ENCODE measurements at regions of chr14 and their contacts with region 1.

Region 1: DNA sequence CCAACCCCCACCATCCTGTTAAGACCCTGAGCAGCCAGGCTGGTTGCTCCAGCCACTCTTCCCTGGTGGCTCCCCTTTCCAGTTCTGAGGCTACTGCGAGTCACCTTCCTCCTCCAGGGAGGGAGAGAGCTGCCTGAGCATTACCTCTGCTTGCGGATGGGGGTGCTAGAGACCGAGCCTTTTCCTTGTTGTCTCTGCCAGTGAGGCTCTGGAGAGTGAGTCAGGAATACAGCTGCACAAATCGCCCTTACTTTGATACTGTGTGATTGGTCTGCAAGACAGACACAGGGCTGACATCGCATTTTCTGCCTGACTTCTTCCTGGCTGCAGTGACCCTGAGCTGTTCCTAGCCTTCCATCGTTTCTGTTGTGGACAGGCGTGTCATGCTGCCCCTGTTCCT is 94.3 kb downstream of the SLC25A47 start:
- DNase-seq: peak; percentile 97
- H3K4me3 ChIP-seq: no peak overlapping the region
- H3K27ac ChIP-seq: peak overlapping the region; percentile 79
- H3K4me1 ChIP-seq: peaks cover 18% of the 10 kb centered on the region
- H3K27me3 ChIP-seq: no peaks in the 10 kb centered on the region

Region 2: DNA sequence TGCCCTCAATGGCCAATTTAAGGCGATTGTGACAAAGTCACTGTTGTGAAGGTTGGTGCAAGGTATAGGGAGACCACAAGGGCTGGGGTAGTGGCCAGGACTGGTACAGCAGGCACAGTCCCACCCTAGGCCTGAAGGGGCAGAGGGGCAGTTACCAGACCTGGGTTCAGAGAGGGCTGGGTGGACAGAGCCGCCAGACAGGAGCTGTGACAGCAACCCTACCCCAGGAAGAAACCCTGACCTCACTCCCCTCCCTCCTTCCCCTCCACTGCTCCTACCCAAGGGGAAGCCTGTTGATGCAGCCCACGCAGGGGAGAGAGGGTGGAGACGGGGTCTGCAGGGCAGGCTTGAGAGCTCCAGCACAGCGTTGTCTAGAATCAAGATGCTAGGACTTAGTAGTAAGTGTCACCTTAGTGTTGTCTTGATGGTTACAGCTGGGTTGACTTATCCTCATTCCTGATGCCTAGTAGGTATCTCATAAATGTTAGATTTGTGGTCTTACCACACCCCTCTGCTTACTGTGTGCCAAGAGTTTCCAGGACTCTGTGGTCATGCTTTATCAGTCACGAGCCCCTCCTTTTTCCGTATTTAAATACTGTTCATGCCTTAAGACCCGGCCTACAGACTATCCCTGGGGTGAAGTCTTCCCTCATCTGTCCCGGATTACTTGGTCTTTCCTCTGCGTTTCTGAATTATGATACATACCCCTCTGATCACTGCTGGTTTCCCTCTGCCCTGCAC is 609.9 kb before region 1 on chr14:
- in situ Hi-C with region 1: no loop called
- DNase-seq: peak; percentile 75
- H3K4me3 ChIP-seq: peak overlapping the region; percentile 36
- H3K27ac ChIP-seq: peak overlapping the region; percentile 80
- H3K4me1 ChIP-seq: peaks cover 36% of the 10 kb centered on the region
- H3K27me3 ChIP-seq: no peaks in the 10 kb centered on the region

Region 3: GRCh38 chr14:100605706-100606686 is 188.5 kb after region 1 on chr14:
- in situ Hi-C with region 1: no loop called
- DNase-seq: peak; percentile 41
- H3K4me3 ChIP-seq: no peak overlapping the region
- H3K27ac ChIP-seq: no peak overlapping the region
- H3K4me1 ChIP-seq: no peaks in the 10 kb centered on the region
- H3K27me3 ChIP-seq: peaks cover 23% of the 10 kb centered on the region

Region 4: GRCh38 chr14:100645192-100645990 is 227.9 kb after region 1 on chr14:
- in situ Hi-C with region 1: loop called (anchors 25 kb)
- DNase-seq: peak; percentile 94
- H3K4me3 ChIP-seq: no peak overlapping the region
- H3K27ac ChIP-seq: no peak overlapping the region
- H3K4me1 ChIP-seq: peaks cover 10% of the 10 kb centered on the region
- H3K27me3 ChIP-seq: no peaks in the 10 kb centered on the region

Region 5: GRCh38 chr14:100828031-100828769 is 410.7 kb after region 1 on chr14:
- in situ Hi-C with region 1: loop called (anchors 25 kb)
- DNase-seq: peak; percentile 80
- H3K4me3 ChIP-seq: peak overlapping the region; percentile 94
- H3K27ac ChIP-seq: peak overlapping the region; percentile 96
- H3K4me1 ChIP-seq: no peaks in the 10 kb centered on the region
- H3K27me3 ChIP-seq: no peaks in the 10 kb centered on the region

Region 6: DNA sequence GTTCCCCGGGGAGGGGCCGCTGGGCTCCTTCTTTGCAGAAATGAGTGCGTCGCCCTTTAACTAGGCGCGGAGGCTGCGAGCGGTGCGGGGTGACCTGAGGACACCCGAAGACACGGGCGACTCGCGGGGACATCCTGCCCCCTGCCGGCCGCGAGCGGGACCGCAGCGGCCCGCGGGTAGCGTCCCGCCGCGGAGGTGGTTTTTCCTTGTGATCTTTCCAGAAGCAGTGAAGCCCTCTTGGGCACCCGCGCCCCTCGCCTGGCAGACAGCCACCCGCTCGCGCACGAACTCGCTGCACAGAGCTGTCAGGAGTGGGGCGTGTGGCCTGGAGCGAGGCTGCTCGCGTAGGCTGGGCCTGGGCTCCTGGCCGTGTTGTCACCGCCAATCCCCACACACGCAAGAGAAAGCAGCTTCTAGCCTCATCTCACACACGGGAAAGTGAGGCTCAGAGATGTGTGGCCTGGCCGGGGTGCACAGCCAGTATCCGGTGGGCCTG is 1211.1 kb after region 1 on chr14:
- in situ Hi-C with region 1: loop called (anchors 25 kb)
- DNase-seq: peak; percentile 84
- H3K4me3 ChIP-seq: peak overlapping the region; percentile 59
- H3K27ac ChIP-seq: no peak overlapping the region
- H3K4me1 ChIP-seq: peaks cover 5% of the 10 kb centered on the region; the same call in 1 of the 2 replicates
- H3K27me3 ChIP-seq: peaks cover 16% of the 10 kb centered on the region

Measured in GM23248 (cell line).